PC-9 (cell line): ENCODE measurements at regions of chr6 and their contacts with region 1.

Region 1: GRCh38 chr6:31739639-31740396 is at the start of gene MSH5:
- DNase-seq: peak; percentile 98
- H3K4me3 ChIP-seq: peak within 1 kb of the TSS; percentile 69
- H3K27ac ChIP-seq: peak within 1 kb of the TSS; percentile 14
- H3K4me1 ChIP-seq: peaks cover 33% of the 10 kb centered on the region
- H3K27me3 ChIP-seq: no peaks in the 10 kb centered on the region
- CTCF ChIP-seq: no peak
- total RNA-seq, gene MSH5: 50.0 and 68.8 TPM in 2 replicates

Region 2: GRCh38 chr6:31493875-31494694 is 245.7 kb before region 1 on chr6:
- CTCF ChIA-PET with region 1: no interaction called
- POLR2A ChIA-PET with region 1: no interaction called
- intact Hi-C with region 1: loop called (anchors 5 kb)
- DNase-seq: peak; percentile 54 to 84
- H3K4me3 ChIP-seq: peak overlapping the region; percentile 67
- H3K27ac ChIP-seq: peak overlapping the region; percentile 47; the same call in 1 of the 2 replicates
- H3K4me1 ChIP-seq: peaks cover 22% of the 10 kb centered on the region
- H3K27me3 ChIP-seq: no peaks in the 10 kb centered on the region
- CTCF ChIP-seq: peak; percentile 87

Region 3: DNA sequence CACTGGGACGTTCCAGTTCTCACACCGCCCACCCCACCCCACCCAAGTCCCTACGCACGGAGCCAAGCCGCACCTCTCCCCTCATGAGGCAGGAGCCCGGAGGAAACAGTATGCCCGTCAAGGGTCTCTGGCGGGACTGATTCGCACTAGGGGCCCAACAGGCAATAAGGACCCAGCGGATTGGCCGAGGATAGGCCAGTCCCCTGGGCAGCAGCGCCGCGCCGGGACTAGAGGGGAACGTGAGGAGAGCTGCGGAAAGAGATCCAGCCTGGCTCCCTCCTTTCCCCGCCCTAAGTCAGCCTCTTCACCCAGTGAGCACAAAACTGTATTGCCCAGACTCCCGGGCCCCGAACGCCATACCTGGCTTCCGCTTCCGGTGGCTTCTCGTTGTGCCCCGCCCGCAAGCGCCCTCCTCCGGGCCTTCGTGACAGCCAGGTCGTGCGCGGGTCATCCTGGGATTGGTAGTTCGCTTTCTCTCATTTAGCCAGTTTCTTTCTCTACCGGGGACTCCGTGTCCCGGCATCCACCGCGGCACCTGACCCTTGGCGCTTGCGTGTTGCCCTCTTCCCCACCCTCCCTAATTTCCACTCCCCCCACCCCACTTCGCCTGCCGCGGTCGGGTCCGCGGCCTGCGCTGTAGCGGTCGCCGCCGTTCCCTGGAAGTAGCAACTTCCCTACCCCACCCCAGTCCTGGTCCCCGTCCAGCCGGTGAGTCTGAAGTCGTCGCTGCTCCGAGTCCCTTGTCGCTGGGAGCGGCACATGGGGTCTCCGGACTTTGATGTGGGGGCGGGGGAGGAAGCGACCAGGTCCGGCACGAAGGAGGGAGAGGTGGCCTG is 74.1 kb before region 1 on chr6 and contains the start of gene CSNK2B:
- CTCF ChIA-PET with region 1: no interaction called
- POLR2A ChIA-PET with region 1: interaction called, 13 read pairs
- intact Hi-C with region 1: no loop called
- DNase-seq: peak; percentile 95 to 96
- H3K4me3 ChIP-seq: peak within 1 kb of the TSS; percentile 90
- H3K27ac ChIP-seq: peak within 1 kb of the TSS; percentile 80
- H3K4me1 ChIP-seq: peaks cover 24% of the 10 kb centered on the region
- H3K27me3 ChIP-seq: no peaks in the 10 kb centered on the region
- CTCF ChIP-seq: no peak
- total RNA-seq, gene CSNK2B: 152 and 173 TPM in 2 replicates

Region 4: GRCh38 chr6:31702819-31703522 is 36.8 kb before region 1 on chr6 and contains the start of gene ABHD16A:
- CTCF ChIA-PET with region 1: interaction called, 7 read pairs
- POLR2A ChIA-PET with region 1: interaction called, 7 read pairs
- intact Hi-C with region 1: loop called (anchors 2 kb)
- DNase-seq: peak; percentile 93 to 96
- H3K4me3 ChIP-seq: peak within 1 kb of the TSS; percentile 83
- H3K27ac ChIP-seq: peak within 1 kb of the TSS; percentile 77
- H3K4me1 ChIP-seq: peaks cover 14% of the 10 kb centered on the region
- H3K27me3 ChIP-seq: no peaks in the 10 kb centered on the region
- CTCF ChIP-seq: no peak
- total RNA-seq, gene ABHD16A: 31.3 and 35.2 TPM in 2 replicates

Region 5: DNA sequence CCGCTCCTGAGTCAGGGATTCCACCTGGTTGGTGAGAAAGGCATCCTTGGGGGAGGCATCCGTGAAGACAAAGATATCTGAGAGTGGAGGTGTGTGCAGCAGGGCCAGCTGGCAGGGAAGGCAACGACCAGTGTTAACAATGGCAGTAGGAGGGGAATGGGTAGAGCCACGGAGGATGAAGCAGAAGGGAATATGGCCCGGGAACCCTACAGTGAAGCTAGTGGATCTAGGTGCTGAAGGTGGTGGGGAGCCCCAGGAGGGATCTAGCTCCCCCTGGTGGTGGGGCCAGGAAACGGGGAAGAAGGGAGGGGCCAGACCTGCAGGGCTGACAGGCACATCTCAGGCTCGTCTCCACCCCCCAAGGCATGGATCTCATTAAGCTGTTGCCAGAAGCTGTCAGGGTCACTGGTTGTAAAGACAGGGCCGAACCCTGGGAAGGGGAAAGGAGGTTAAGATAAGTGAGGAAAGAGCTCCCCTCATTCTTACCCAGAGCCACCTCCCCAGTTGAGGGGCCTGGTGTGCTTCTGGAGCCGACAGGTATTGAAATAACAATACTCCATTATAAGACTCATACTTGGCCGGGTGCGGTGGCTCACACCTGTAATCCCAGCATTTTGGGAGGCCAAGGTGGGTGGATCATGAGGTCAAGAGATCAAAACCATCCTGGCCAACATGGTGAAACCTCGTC is 30.0 kb after region 1 on chr6:
- CTCF ChIA-PET with region 1: interaction called, 10 read pairs
- POLR2A ChIA-PET with region 1: interaction called, 5 read pairs
- intact Hi-C with region 1: no loop called
- DNase-seq: peak; percentile 55 to 83
- H3K4me3 ChIP-seq: no peak overlapping the region
- H3K27ac ChIP-seq: no peak overlapping the region
- H3K4me1 ChIP-seq: peaks cover 5% of the 10 kb centered on the region
- H3K27me3 ChIP-seq: no peaks in the 10 kb centered on the region
- CTCF ChIP-seq: peak; percentile 93

Region 6: DNA sequence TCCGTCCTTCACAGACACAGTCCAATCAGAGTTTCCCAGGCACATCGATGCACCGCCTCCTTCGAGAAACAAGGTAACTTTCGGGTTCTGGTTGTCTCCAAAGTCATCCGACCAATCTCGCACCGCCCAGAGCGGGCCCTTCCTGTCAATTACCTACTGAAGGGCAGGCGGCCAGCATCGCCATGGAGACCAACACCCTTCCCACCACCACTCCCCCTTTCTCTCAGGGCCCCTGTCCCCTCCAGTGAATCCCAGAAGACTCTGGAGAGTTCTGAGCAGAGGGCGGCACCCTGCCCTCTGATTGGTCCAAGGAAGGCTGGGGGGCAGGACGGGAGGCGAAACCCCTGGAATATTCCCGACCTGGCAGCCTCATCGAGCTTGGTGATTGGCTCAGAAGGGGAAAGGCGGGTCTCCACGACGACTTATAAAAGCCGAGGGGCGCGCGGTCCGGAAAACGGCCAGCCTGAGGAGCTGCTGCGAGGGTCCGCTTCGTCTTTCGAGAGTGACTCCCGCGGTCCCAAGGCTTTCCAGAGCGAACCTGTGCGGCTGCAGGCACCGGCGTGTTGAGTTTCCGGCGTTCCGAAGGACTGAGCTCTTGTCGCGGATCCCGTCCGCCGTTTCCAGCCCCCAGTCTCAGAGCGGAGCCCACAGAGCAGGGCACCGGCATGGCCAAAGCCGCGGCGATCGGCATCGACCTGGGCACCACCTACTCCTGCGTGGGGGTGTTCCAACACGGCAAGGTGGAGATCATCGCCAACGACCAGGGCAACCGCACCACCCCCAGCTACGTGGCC is 87.7 kb after region 1 on chr6 and contains the start of gene HSPA1B:
- CTCF ChIA-PET with region 1: interaction called, 8 read pairs
- POLR2A ChIA-PET with region 1: interaction called, 8 read pairs
- intact Hi-C with region 1: loop called (anchors 2 kb)
- DNase-seq: peak; percentile 99
- H3K4me3 ChIP-seq: peak within 1 kb of the TSS; percentile 84
- H3K27ac ChIP-seq: peak within 1 kb of the TSS; percentile 98
- H3K4me1 ChIP-seq: peaks cover 54% of the 10 kb centered on the region
- H3K27me3 ChIP-seq: no peaks in the 10 kb centered on the region
- CTCF ChIP-seq: no peak
- total RNA-seq, gene HSPA1B: 334 and 340 TPM in 2 replicates

Region 7: DNA sequence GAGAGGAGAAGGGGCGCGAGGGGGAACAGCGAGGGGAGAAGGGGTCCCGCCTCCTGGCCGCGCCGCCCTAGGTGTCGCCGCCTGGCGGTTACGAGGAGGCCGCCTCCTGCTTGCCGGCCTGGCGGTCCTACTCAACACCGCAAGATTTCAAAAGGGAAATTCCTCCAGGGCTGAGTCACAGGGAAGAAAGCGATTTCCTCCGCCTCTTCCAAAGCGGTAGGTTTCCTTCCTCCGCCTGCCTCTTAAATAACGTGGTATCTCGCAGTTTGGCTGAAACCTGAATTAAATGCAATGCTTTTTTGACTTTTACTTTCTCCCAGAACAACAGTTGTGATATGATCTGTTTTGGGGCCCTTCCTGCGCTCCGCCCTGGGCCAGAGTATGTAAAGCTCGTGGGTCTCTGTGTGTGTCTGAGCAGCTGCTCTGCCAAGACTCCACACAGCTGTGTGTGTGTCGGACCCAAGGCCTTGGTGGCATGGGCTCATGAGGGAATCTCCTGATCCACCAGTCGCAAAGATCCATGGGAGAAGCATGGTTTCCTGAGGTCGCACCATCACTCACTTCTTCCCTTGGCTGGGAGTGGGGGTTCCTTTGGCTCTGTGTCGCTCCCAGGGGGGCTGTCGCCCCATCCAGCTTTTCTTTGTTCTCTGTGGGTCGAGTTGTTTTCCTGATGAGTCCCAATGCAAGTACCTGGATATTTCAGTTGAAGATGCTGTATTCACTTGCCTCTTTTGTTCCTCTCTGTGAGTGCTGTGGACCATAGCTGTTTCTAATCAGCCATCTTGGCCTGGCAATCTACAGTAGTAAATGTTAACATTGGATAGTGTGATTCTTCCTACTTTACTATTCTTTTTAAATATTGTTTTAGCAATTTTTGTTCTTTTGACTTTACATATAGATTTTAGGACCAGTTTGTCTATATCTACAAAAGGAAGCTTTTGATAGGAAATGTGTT is 515.7 kb after region 1 on chr6:
- CTCF ChIA-PET with region 1: no interaction called
- POLR2A ChIA-PET with region 1: interaction called, 21 read pairs
- intact Hi-C with region 1: no loop called
- DNase-seq: peak; percentile 73 to 76
- H3K4me3 ChIP-seq: no peak overlapping the region
- H3K27ac ChIP-seq: no peak overlapping the region
- H3K4me1 ChIP-seq: peaks cover 5% of the 10 kb centered on the region; the same call in 1 of the 2 replicates
- H3K27me3 ChIP-seq: peaks cover 33% of the 10 kb centered on the region
- CTCF ChIP-seq: peak; percentile 55